Psoas muscle (tissue), 8 donors: ENCODE measurements at regions of chr17 and their contacts with region 1.

Region 1: DNA sequence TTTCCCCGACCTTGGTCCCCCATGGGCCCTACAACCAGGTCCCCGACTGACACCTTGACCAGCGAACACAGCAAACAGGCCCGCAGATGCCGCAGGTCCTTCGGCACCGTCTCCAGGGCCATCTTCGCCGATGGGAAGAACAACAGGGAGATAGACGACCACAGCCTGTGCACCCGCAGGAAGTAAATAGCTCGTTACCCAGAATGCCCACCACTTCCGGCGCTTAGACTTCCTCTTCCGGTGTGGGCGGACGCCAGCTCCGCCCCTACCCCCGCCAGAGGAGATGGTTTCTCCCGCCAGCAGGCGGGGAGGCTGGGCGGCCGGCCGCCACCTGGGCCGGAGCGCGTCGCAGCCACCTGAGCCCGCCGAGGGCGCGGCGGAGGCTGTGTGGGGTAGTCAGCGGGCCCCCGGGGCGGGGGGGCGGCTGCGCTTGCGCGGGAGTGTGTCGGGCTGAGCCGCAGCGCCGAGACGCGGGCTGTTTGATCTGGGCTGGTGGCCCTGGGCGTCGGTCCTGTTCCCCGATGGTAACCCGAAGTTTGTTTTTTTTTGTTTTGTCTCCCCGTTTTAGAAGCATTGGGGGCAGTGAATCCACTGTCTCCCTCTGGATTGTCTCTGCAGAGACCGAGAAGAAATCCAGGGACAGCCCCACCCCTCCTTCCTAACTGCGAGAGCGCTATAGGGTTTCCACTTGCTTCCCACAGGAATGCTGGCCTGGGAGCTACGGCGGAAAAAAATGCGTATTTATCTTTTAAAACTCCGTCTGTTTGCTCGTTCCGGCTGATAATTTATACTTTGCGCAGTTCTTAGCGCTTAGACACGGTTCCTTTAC is at the start of gene SUPT4H1:
- DNase-seq: peak; percentile 85 to 94
- ATAC-seq: peak; percentile 98 to 99 (median 98)
- H3K4me3 ChIP-seq: peak within 1 kb of the TSS; percentile 85
- H3K27ac ChIP-seq: peak within 1 kb of the TSS; percentile 94
- H3K4me1 ChIP-seq: peaks cover 15% of the 10 kb centered on the region
- H3K27me3 ChIP-seq: no peaks in the 10 kb centered on the region
- CTCF ChIP-seq: no peak
- total RNA-seq, gene SUPT4H1: 52.1 to 58.9 (median 56.2) TPM

Region 2: GRCh38 chr17:58324409-58325288 is 27.6 kb before region 1 on chr17:
- intact Hi-C with region 1: loop called in 1 of 2 experiments (anchors 2 kb)
- DNase-seq: peak in 1 of 2 donors; percentile 75
- ATAC-seq: peak; percentile 62 to 94 (median 84)
- H3K4me3 ChIP-seq: peak overlapping the region; percentile 86
- H3K27ac ChIP-seq: peak overlapping the region; percentile 55
- H3K4me1 ChIP-seq: peaks cover 6% of the 10 kb centered on the region
- H3K27me3 ChIP-seq: peaks cover 0 to 9% (median 5%) of the 10 kb centered on the region in 3 donors
- CTCF ChIP-seq: no peak